A549 (cell line): ENCODE measurements at regions of chr5 and their contacts with region 1.

Region 1: GRCh38 chr5:37248970-37249686 is at the start of gene CPLANE1:
- DNase-seq: peak; percentile 56 to 81
- ATAC-seq: peak; percentile 94 to 95
- H3K4me3 ChIP-seq: peak within 1 kb of the TSS; percentile 62
- H3K27ac ChIP-seq: peak within 1 kb of the TSS; percentile 87 to 93
- H3K4me1 ChIP-seq: 0 out of 3 replicates have a peak, but pooled peaks cover 10% of the 10 kb centered on the region
- CTCF ChIP-seq: no peak
- EP300 ChIP-seq: no peak
- POLR2A ChIP-seq: peak; percentile 92
- RAD21 ChIP-seq: peak in 1 of 2 experiments; percentile 27; a peak in 1 of 5 replicates
- polyA plus RNA-seq, gene CPLANE1: 15.7 and 16.1 TPM in 2 replicates

Region 2: DNA sequence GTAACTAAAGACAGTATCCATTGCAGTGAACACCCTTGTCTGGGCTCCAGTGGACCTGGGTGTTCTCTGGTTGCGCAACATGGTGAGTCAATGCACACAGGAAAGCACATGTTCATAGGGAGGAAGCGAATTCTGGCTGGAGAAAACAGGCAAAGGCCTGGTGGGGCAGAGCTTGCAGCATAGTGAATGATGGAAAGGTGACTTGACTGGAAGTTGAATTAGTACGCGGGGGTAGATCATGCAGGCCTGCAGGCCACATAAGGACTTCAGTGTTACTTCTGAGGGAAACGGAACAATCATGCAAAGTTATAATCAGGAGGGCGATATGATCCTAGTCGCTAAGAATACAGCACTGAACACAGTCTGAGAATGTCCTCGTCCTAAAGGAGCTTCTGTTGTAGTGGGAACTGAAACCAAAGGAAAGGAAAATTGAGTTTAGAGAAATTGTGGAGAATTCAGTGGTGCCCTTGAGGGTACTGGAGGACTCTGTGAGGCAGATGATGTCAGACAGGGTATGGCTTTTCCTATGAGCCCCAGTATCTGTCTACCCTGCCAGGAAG is 875.5 kb before region 1 on chr5:
- CTCF ChIA-PET with region 1: no interaction called
- POLR2A ChIA-PET with region 1: no interaction called
- DNase-seq: peak in 1 of 2 experiments; percentile 42
- ATAC-seq: peak; percentile 39 to 57; a peak in 3 of 6 replicates
- H3K4me3 ChIP-seq: no peak overlapping the region
- H3K27ac ChIP-seq: no peak overlapping the region
- H3K4me1 ChIP-seq: no peaks in the 10 kb centered on the region
- CTCF ChIP-seq: no peak
- EP300 ChIP-seq: no peak
- POLR2A ChIP-seq: no peak
- RAD21 ChIP-seq: no peak

Region 3: GRCh38 chr5:37226377-37226776 is 22.8 kb before region 1 on chr5:
- CTCF ChIA-PET with region 1: no interaction called
- POLR2A ChIA-PET with region 1: no interaction called
- DNase-seq: no peak
- ATAC-seq: no peak
- H3K4me3 ChIP-seq: no peak overlapping the region
- H3K27ac ChIP-seq: no peak overlapping the region
- H3K4me1 ChIP-seq: no peaks in the 10 kb centered on the region
- CTCF ChIP-seq: no peak
- EP300 ChIP-seq: no peak
- POLR2A ChIP-seq: no peak
- RAD21 ChIP-seq: no peak

Region 4: DNA sequence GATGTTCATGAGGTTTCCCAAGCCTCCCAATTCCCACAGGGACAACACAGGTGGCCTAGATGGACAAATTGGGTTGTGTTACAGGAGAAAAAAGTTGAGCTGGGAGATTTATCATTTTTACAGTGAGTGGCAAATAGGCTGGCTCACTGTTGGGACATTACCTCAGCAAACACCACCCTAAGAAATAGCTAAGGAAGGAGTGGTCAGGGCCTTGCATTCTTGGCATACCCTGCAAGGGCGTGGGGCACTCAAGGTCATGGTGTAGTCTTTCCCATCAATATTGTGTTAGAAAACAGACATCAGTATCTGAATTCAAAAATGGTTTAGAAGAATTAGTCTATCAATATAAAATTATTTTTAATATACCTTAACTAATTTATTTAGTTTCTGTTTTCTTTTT is 23.4 kb after region 1 on chr5:
- CTCF ChIA-PET with region 1: no interaction called
- POLR2A ChIA-PET with region 1: interaction called, 27 read pairs
- DNase-seq: peak; percentile 41 to 88
- ATAC-seq: peak; percentile 97 to 99
- H3K4me3 ChIP-seq: no peak overlapping the region
- H3K27ac ChIP-seq: peak overlapping the region; percentile 82 to 85
- H3K4me1 ChIP-seq: peaks cover 11% of the 10 kb centered on the region
- CTCF ChIP-seq: no peak
- EP300 ChIP-seq: no peak; a peak in 1 of 5 replicates
- POLR2A ChIP-seq: no peak
- RAD21 ChIP-seq: no peak

Region 5: DNA sequence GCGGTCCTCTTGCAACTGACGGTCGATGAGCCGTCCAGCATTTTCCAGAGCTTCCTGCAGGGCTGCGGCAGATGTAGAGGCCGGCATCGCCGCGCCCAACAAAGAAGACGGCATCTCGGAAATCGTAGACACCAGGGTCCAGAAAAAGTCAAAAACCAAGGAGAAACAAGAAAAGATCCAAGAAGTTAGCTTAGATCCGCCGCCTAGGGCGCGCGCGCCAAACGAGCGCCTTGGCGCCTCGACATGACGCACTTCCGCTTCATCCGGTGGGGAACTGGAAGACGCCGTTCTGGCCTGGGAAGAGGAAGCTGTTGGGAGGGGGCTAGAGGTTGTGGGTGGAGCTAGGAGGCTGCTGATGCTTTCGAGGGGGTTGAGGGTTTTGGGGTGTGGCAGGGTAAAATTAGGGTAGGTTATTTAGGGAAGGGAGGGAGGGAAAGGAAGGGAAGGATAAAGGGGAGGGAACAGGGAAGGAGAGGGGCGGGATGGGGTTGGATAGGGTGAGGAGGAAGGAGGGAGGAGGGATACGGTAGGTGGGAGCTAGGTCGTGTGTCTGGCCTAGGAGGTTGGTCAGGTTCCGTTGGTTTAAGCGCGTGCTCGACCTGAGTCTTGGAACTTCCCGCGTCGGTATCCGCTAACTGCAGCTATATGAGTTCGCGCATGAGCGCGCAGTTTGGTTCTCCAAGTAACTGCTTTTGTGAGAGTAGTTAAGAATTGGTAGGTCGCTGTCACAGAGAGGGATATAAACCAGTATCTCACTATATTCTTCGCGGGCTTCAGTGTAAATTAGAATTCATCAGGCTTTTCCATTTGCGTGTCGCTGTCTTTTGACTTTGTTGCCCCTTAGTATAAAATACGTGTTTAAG is 122.0 kb after region 1 on chr5 and contains the start of gene NUP155:
- CTCF ChIA-PET with region 1: no interaction called
- POLR2A ChIA-PET with region 1: interaction called, 13 read pairs
- DNase-seq: peak; percentile 91 to 98
- ATAC-seq: peak; percentile 97
- H3K4me3 ChIP-seq: peak within 1 kb of the TSS; percentile 87
- H3K27ac ChIP-seq: peak within 1 kb of the TSS; percentile 86 to 90
- H3K4me1 ChIP-seq: peaks cover 14% of the 10 kb centered on the region; the same call in 2 of the 3 replicates
- CTCF ChIP-seq: no peak
- EP300 ChIP-seq: no peak
- POLR2A ChIP-seq: peak; percentile 87
- RAD21 ChIP-seq: no peak
- polyA plus RNA-seq, gene NUP155: 33.3 and 38.8 TPM in 2 replicates